ENCODE measurements at regions of chr7 and their contacts with region 1.

Region 1: GRCh38 chr7:100691676-100692577 is 2.1 kb downstream of the GIGYF1 start:
- DNase-seq: peak; percentile 78
- ATAC-seq: peak; percentile 75
- H3K4me3 ChIP-seq: peak overlapping the region; percentile 96
- H3K27ac ChIP-seq: no peak overlapping the region
- H3K4me1 ChIP-seq: peaks cover 12% of the 10 kb centered on the region
- H3K27me3 ChIP-seq: no peaks in the 10 kb centered on the region
- CTCF ChIP-seq: peak; percentile 94

Region 2: GRCh38 chr7:100604028-100604975 is 87.6 kb before region 1 on chr7:
- CTCF ChIA-PET with region 1: no interaction called
- POLR2A ChIA-PET with region 1: no interaction called
- intact Hi-C with region 1: loop called (anchors 2 kb)
- DNase-seq: peak; percentile 59
- ATAC-seq: peak; percentile 65
- H3K4me3 ChIP-seq: peak overlapping the region; percentile 80
- H3K27ac ChIP-seq: no peak overlapping the region
- H3K4me1 ChIP-seq: peaks cover 24% of the 10 kb centered on the region
- H3K27me3 ChIP-seq: no peaks in the 10 kb centered on the region
- CTCF ChIP-seq: peak; percentile 52

Region 3: DNA sequence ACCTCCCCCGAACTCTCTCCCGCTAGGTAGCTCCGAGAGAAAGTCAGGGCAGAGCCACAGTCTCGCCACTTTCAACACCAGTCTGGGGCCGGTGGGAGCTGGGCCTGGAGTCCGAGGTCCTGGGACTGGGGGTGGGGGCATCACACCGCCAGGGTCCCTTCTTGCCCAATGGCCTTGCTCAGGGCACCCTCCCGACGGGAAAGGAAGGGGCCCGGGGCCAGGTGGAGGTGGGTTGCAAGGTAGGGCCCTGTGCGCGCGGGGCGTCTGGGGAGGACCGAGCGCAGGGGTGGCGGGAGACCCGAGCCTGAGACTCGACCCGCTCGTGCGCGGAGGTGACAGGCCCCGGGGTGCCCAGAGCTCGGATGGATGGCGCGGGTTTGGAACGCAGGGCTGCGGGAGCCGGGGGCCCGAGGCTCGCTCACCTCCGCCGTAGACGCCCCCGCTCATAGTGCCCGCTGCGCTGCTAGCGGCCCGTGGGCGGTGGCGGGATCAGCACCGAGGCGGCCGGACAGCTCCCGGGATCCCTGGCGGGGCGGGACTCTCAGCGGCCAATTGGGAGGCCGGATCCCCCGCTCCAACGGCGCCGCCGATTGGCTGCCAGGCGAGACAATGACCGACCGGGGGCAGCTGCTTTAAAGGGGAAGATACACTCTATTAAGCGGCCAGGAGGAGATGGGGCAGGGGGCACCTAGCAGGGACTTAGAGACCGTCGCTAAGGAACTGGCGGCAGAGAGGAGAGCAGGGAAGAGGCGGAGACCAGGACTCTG is 35.8 kb before region 1 on chr7 and contains the start of gene ACTL6B:
- CTCF ChIA-PET with region 1: interaction called, 15 read pairs
- POLR2A ChIA-PET with region 1: no interaction called
- intact Hi-C with region 1: no loop called
- DNase-seq: no peak
- ATAC-seq: peak; percentile 18; the same call in 1 of the 2 replicates
- H3K4me3 ChIP-seq: no peak within 1 kb of the TSS
- H3K27ac ChIP-seq: no peak within 1 kb of the TSS
- H3K4me1 ChIP-seq: no peaks in the 10 kb centered on the region
- H3K27me3 ChIP-seq: no peaks in the 10 kb centered on the region
- CTCF ChIP-seq: no peak
- total RNA-seq, gene ACTL6B: not detected in 2 replicates

Measured in PC-3 (cell line).